T-cell (primary cell): ENCODE measurements at regions of chr1 and their contacts with region 1.

Region 1: GRCh38 chr1:32063261-32063681 is 9.5 kb upstream of the TMEM39B start:
- DNase-seq: peak in 1 of 35 experiments; percentile 55
- ATAC-seq: peak in 3 of 4 experiments; percentile 52 to 61 (median 54)
- H3K4me3 ChIP-seq: no peak overlapping the region
- H3K4me3 Mint-ChIP-seq: no peak overlapping the region
- H3K27ac ChIP-seq: no peak overlapping the region
- H3K27ac Mint-ChIP-seq: peak overlapping the region; percentile 80 to 84
- H3K4me1 ChIP-seq: peaks cover 3 to 14% of the 10 kb centered on the region in 2 experiments
- H3K4me1 Mint-ChIP-seq: peaks cover 11 to 15% (median 12%) of the 10 kb centered on the region in 3 donors
- H3K27me3 ChIP-seq: no peaks in the 10 kb centered on the region
- H3K27me3 Mint-ChIP-seq: no peaks in the 10 kb centered on the region

Region 2: DNA sequence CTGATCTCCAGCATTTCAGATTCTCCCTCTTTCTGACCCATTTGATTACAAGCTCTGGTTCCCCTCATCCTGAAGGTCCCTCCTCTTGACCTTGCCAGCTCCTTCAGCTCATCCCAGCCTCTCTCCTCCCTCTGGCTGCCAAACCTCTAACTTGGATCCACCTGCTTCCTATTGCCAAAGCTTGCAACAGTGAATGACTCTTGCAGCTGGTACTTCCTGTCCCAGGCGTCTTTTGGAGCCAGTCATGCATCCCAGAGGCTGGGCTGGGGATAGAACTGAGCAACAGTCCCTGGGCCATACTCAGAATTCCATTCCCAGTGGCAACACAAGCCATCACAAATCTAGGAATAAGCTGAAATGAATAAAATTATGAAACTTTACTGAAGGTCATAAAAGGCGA is 219.8 kb before region 1 on chr1:
- CTCF ChIA-PET with region 1: no interaction called
- POLR2A ChIA-PET with region 1: interaction called in 1 of 2 experiments, 10 read pairs
- DNase-seq: no peak
- ATAC-seq: no peak
- H3K4me3 ChIP-seq: no peak overlapping the region
- H3K4me3 Mint-ChIP-seq: no peak overlapping the region
- H3K27ac ChIP-seq: no peak overlapping the region
- H3K27ac Mint-ChIP-seq: peak overlapping the region in 1 of 2 donors; percentile 16
- H3K4me1 ChIP-seq: peaks cover 24 to 36% of the 10 kb centered on the region in 2 experiments
- H3K4me1 Mint-ChIP-seq: peaks cover 47 to 62% (median 49%) of the 10 kb centered on the region in 3 donors
- H3K27me3 ChIP-seq: no peaks in the 10 kb centered on the region
- H3K27me3 Mint-ChIP-seq: no peaks in the 10 kb centered on the region

Region 3: GRCh38 chr1:31867546-31867945 is 195.7 kb before region 1 on chr1:
- CTCF ChIA-PET with region 1: no interaction called
- POLR2A ChIA-PET with region 1: no interaction called
- DNase-seq: no peak
- ATAC-seq: no peak
- H3K4me3 ChIP-seq: no peak overlapping the region
- H3K4me3 Mint-ChIP-seq: no peak overlapping the region
- H3K27ac ChIP-seq: no peak overlapping the region
- H3K27ac Mint-ChIP-seq: no peak overlapping the region
- H3K4me1 ChIP-seq: peaks cover 0 to 10% of the 10 kb centered on the region in 2 experiments
- H3K4me1 Mint-ChIP-seq: peaks cover 12 to 36% (median 16%) of the 10 kb centered on the region in 3 donors
- H3K27me3 ChIP-seq: no peaks in the 10 kb centered on the region
- H3K27me3 Mint-ChIP-seq: no peaks in the 10 kb centered on the region

Region 4: GRCh38 chr1:31991182-31991581 is 72.1 kb before region 1 on chr1:
- CTCF ChIA-PET with region 1: no interaction called
- POLR2A ChIA-PET with region 1: no interaction called
- DNase-seq: no peak
- ATAC-seq: no peak
- H3K4me3 ChIP-seq: no peak overlapping the region
- H3K4me3 Mint-ChIP-seq: no peak overlapping the region
- H3K27ac ChIP-seq: no peak overlapping the region
- H3K27ac Mint-ChIP-seq: peak overlapping the region in 1 of 2 donors; percentile 48
- H3K4me1 ChIP-seq: peaks cover 0 to 8% of the 10 kb centered on the region in 2 experiments
- H3K4me1 Mint-ChIP-seq: peaks cover 16 to 26% (median 22%) of the 10 kb centered on the region in 3 donors
- H3K27me3 ChIP-seq: no peaks in the 10 kb centered on the region
- H3K27me3 Mint-ChIP-seq: no peaks in the 10 kb centered on the region

Region 5: GRCh38 chr1:32122151-32122550 is 58.9 kb after region 1 on chr1:
- CTCF ChIA-PET with region 1: no interaction called
- POLR2A ChIA-PET with region 1: no interaction called
- DNase-seq: no peak
- ATAC-seq: no peak
- H3K4me3 ChIP-seq: no peak overlapping the region
- H3K4me3 Mint-ChIP-seq: peak overlapping the region in 2 of 3 donors; percentile 48 to 56
- H3K27ac ChIP-seq: no peak overlapping the region
- H3K27ac Mint-ChIP-seq: peak overlapping the region; percentile 79 to 83
- H3K4me1 ChIP-seq: peaks cover 10 to 41% of the 10 kb centered on the region in 2 experiments
- H3K4me1 Mint-ChIP-seq: peaks cover 47 to 61% (median 59%) of the 10 kb centered on the region in 3 donors
- H3K27me3 ChIP-seq: no peaks in the 10 kb centered on the region
- H3K27me3 Mint-ChIP-seq: no peaks in the 10 kb centered on the region